Panc1 (cell line): ENCODE measurements at regions of chr21 and their contacts with region 1.

Region 1: DNA sequence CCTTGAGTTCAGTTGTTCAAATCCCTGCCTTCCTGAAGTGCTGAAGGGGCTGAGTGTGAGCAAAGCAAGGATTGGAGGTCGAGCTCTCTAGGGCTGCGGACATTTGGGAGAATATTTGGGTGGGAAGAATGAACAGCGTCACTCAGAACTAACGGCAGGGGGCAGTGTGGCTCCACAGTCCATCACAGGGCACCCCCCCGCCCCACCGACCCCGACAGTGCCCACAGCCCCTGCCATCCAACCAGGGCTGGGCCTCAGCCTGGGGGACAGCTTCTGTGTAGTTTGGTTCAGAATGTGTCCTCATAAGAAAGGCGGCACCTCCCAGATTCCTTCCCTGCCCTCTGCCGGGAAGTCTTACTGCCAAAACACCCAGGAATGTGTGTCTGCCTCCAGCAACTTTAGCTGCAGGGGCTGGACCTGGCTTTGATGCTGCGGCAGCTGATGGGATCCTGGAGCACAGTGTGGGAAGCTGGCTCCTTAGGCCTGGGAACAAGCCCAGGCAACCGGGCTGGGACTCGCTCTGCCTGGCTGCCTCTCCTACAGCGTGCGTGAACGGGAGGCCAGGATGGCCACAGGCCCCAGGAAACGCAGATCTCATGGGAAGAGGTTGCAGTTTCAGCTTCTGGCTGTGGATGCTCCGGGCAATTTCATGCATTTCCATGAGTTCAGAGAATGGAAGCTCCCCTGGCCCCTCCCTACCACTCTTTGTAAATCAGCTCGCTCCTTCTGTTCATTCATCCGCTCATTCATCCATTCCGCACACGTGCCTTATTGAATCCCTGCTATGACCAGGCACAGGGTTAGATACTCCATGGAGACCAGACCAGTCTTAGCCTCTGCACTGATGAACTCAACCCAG is 104.9 kb upstream of the TMPRSS2 start:
- DNase-seq: no peak
- ATAC-seq: peak; percentile 85
- H3K4me3 ChIP-seq: peak overlapping the region in 1 of 2 experiments; percentile 20; a peak in 2 of 4 replicates
- H3K27ac ChIP-seq: peak overlapping the region; percentile 97
- H3K4me1 ChIP-seq: peaks cover 57% of the 10 kb centered on the region
- H3K27me3 ChIP-seq: no peaks in the 10 kb centered on the region
- CTCF ChIP-seq: peak; percentile 85

Region 2: GRCh38 chr21:41545466-41546359 is 67.2 kb before region 1 on chr21:
- CTCF ChIA-PET with region 1: no interaction called
- POLR2A ChIA-PET with region 1: no interaction called
- in situ Hi-C with region 1: no loop called
- intact Hi-C with region 1: no loop called
- DNase-seq: no peak
- ATAC-seq: no peak
- H3K4me3 ChIP-seq: peak overlapping the region in 1 of 2 experiments; percentile 11; a peak in 1 of 4 replicates
- H3K27ac ChIP-seq: peak overlapping the region; percentile 57; the same call in 1 of the 2 replicates
- H3K4me1 ChIP-seq: no peaks in the 10 kb centered on the region
- H3K27me3 ChIP-seq: no peaks in the 10 kb centered on the region
- CTCF ChIP-seq: no peak

Region 3: GRCh38 chr21:41678944-41679343 is 66.0 kb after region 1 on chr21:
- CTCF ChIA-PET with region 1: interaction called, 7 read pairs
- POLR2A ChIA-PET with region 1: interaction called, 7 read pairs
- in situ Hi-C with region 1: no loop called
- intact Hi-C with region 1: loop called (anchors 2 kb)
- DNase-seq: peak; percentile 94
- ATAC-seq: peak; percentile 84
- H3K4me3 ChIP-seq: peak overlapping the region; percentile 33 to 46
- H3K27ac ChIP-seq: peak overlapping the region; percentile 97
- H3K4me1 ChIP-seq: peaks cover 78% of the 10 kb centered on the region
- H3K27me3 ChIP-seq: no peaks in the 10 kb centered on the region
- CTCF ChIP-seq: no peak

Region 4: GRCh38 chr21:41752231-41752681 is 139.4 kb after region 1 on chr21:
- CTCF ChIA-PET with region 1: interaction called, 18 read pairs
- POLR2A ChIA-PET with region 1: interaction called, 4 read pairs
- in situ Hi-C with region 1: loop called (anchors 25 kb)
- intact Hi-C with region 1: loop called (anchors 5 kb)
- DNase-seq: no peak
- ATAC-seq: peak; percentile 57
- H3K4me3 ChIP-seq: peak overlapping the region in 1 of 2 experiments; percentile 2; a peak in 2 of 4 replicates
- H3K27ac ChIP-seq: peak overlapping the region; percentile 94
- H3K4me1 ChIP-seq: peaks cover 90% of the 10 kb centered on the region
- H3K27me3 ChIP-seq: no peaks in the 10 kb centered on the region
- CTCF ChIP-seq: no peak

Region 5: GRCh38 chr21:41768437-41769061 is 155.6 kb after region 1 on chr21:
- CTCF ChIA-PET with region 1: interaction called, 8 read pairs
- POLR2A ChIA-PET with region 1: interaction called, 4 read pairs
- in situ Hi-C with region 1: loop called (anchors 25 kb)
- intact Hi-C with region 1: no loop called
- DNase-seq: no peak
- ATAC-seq: peak; percentile 50
- H3K4me3 ChIP-seq: peak overlapping the region; percentile 72 to 91
- H3K27ac ChIP-seq: peak overlapping the region; percentile 95
- H3K4me1 ChIP-seq: peaks cover 30% of the 10 kb centered on the region
- H3K27me3 ChIP-seq: no peaks in the 10 kb centered on the region
- CTCF ChIP-seq: peak; percentile 67

Region 6: GRCh38 chr21:41816220-41817165 is 203.6 kb after region 1 on chr21:
- CTCF ChIA-PET with region 1: interaction called, 14 read pairs
- POLR2A ChIA-PET with region 1: no interaction called
- in situ Hi-C with region 1: no loop called
- intact Hi-C with region 1: loop called (anchors 1 kb)
- DNase-seq: no peak
- ATAC-seq: peak; percentile 84
- H3K4me3 ChIP-seq: no peak overlapping the region
- H3K27ac ChIP-seq: peak overlapping the region; percentile 76
- H3K4me1 ChIP-seq: peaks cover 5% of the 10 kb centered on the region; the same call in 1 of the 2 replicates
- H3K27me3 ChIP-seq: no peaks in the 10 kb centered on the region
- CTCF ChIP-seq: peak; percentile 68